ENCODE measurements at regions of chr7 and their contacts with region 1.

Region 1: GRCh38 chr7:90424720-90425119 is 21.5 kb downstream of the CLDN12 start:
- DNase-seq: no peak
- ATAC-seq: no peak
- H3K4me3 Mint-ChIP-seq: no peak overlapping the region
- H3K27ac Mint-ChIP-seq: peak overlapping the region; percentile 58
- H3K4me1 Mint-ChIP-seq: peaks cover 18% of the 10 kb centered on the region
- H3K27me3 Mint-ChIP-seq: no peaks in the 10 kb centered on the region

Region 2: DNA sequence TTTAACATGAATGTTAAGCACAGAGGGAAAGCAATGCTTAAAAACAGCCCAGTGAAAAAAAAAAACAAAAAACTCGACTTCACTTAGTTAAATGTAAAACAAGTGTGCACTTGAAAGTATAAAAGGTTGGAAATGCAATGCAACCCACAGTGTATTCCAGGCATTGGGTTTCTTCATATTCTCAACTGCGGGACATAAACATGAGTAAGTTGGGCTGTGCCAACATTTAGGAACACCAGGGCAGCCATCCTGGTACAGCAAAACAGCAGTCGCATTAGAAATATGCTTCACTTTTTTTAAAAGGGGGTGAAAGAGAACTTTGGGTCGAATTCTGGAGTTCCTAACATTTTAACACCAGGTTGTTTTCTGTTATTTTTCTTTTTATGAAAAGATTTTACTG is 269.5 kb before region 1 on chr7:
- CTCF ChIA-PET with region 1: interaction called, 69 read pairs
- DNase-seq: no peak
- ATAC-seq: no peak
- H3K4me3 Mint-ChIP-seq: no peak overlapping the region
- H3K27ac Mint-ChIP-seq: no peak overlapping the region
- H3K4me1 Mint-ChIP-seq: peaks cover 7% of the 10 kb centered on the region
- H3K27me3 Mint-ChIP-seq: peaks cover 35% of the 10 kb centered on the region

Region 3: GRCh38 chr7:90312745-90313144 is 112.0 kb before region 1 on chr7:
- CTCF ChIA-PET with region 1: interaction called, 13 read pairs
- DNase-seq: no peak
- ATAC-seq: no peak
- H3K4me3 Mint-ChIP-seq: no peak overlapping the region
- H3K27ac Mint-ChIP-seq: no peak overlapping the region
- H3K4me1 Mint-ChIP-seq: no peaks in the 10 kb centered on the region
- H3K27me3 Mint-ChIP-seq: peaks cover 21% of the 10 kb centered on the region

Region 4: DNA sequence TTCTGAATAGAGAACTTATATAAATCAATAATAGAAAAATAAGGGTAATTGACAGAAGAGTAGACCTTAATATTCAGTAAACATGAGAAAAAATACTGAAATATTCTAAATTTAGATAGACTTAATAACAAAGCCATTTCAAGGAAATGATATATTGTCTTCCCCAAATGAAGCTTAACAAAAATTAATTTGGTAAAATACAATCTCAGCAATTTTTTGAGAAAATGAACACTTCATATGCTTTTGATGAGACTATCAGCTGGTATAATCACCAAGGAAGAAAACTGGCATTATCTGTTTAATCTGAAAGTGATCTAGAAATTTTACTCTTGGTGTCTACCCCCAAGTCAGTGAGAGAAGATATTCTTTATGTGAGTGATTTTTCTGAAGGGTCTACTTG is 101.9 kb before region 1 on chr7:
- CTCF ChIA-PET with region 1: no interaction called
- DNase-seq: no peak
- ATAC-seq: no peak
- H3K4me3 Mint-ChIP-seq: no peak overlapping the region
- H3K27ac Mint-ChIP-seq: no peak overlapping the region
- H3K4me1 Mint-ChIP-seq: peaks cover 7% of the 10 kb centered on the region
- H3K27me3 Mint-ChIP-seq: peaks cover 47% of the 10 kb centered on the region

Region 5: DNA sequence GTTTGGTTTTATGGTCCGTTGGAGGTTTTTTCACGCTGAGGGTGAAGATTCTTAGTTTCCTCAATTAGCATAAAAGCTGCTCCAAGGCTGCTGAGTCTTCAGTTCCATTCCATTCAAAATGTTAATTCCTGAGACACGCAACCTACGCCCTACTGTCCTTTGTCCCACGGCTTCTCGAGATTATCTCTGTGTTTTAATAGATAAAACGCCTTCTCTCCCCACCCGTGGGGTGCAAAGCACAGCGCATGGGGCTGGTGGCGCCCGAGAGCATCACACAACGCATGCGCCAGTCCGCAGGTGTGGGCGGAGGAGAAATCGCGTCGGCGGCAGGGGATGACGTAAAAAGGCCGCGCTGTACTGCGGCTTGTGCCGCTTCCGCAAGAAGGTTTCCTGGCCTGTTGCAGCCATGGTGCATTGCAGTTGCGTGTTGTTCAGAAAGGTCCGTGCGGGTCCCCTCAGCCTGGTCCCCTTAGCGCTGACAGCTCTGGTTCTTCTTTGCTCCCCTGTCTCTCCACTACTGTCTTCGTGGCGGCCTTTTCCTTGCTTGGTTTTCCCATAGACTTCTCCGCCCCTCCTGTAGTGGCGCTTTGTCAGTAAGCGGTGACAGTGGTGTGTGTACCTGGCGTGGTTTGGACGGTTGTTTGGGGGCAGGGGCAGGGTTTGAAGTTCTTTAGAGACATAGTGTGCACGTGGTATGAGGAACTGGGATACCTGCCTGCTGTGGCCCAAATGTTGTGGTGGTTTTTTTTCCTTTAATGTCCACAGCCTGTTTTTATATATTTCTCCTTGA is 78.2 kb before region 1 on chr7 and contains the start of gene GTPBP10:
- CTCF ChIA-PET with region 1: interaction called, 11 read pairs
- DNase-seq: peak; percentile 95
- ATAC-seq: peak; percentile 99
- H3K4me3 Mint-ChIP-seq: peak within 1 kb of the TSS; percentile 94
- H3K27ac Mint-ChIP-seq: peak within 1 kb of the TSS; percentile 98
- H3K4me1 Mint-ChIP-seq: peaks cover 31% of the 10 kb centered on the region
- H3K27me3 Mint-ChIP-seq: no peaks in the 10 kb centered on the region
- total RNA-seq, gene GTPBP10: 26.6 to 29.1 TPM

Region 6: GRCh38 chr7:90613088-90613498 is 188.4 kb after region 1 on chr7:
- CTCF ChIA-PET with region 1: no interaction called
- DNase-seq: no peak
- ATAC-seq: no peak
- H3K4me3 Mint-ChIP-seq: no peak overlapping the region
- H3K27ac Mint-ChIP-seq: no peak overlapping the region
- H3K4me1 Mint-ChIP-seq: no peaks in the 10 kb centered on the region
- H3K27me3 Mint-ChIP-seq: no peaks in the 10 kb centered on the region